ENCODE measurements at regions of chr7 and their contacts with region 1.

Region 1: DNA sequence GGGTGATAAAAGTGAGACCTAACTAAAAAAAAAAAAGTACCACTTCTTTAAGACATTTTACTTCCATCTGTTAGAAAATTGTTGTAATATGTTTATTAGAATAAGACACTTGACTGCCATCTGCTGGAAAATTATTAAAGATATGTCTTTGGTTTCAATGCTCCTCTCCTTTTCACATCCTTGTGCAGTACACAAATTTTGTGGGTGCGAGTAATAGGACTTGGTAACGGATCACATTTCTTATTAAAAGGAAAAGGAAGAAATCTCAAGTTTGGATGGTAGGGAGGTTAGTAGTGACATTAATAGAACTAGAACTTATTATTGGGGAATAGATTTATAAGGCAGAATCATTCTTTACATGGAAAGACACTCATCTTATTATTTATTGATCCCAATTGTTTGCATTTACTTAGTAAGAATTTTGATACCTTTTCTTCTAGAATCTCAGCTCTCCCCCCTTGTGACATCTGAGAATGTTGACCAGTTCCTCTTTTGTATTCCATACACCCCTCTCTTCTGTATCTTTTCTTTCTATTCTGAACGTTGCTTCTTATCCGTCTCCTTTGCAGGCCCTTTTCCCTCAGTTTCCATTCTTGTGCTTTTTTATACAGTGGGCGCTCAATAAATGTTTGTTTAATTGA is 43.1 kb upstream of the RPA3 start:
- DNase-seq: peak; percentile 58
- H3K4me3 ChIP-seq: peak overlapping the region; percentile 5 to 58 (median 40)
- H3K27ac ChIP-seq: no peak overlapping the region
- H3K4me1 ChIP-seq: peaks cover 11% of the 10 kb centered on the region
- H3K27me3 ChIP-seq: no peaks in the 10 kb centered on the region
- CTCF ChIP-seq: peak in 1 of 2 donors; percentile 19
- POLR2A ChIP-seq: no peak

Region 2: GRCh38 chr7:7424151-7424873 is 337.1 kb before region 1 on chr7:
- CTCF ChIA-PET with region 1: interaction called, 4 read pairs
- POLR2A ChIA-PET with region 1: no interaction called
- dilution Hi-C with region 1: no loop called
- intact Hi-C with region 1: loop called (anchors 1 kb)
- DNase-seq: peak; percentile 67
- H3K4me3 ChIP-seq: peak overlapping the region; percentile 37 to 93 (median 81)
- H3K27ac ChIP-seq: peak overlapping the region; percentile 3
- H3K4me1 ChIP-seq: peaks cover 2% of the 10 kb centered on the region
- H3K27me3 ChIP-seq: peaks cover 0 to 2% of the 10 kb centered on the region in 2 experiments
- CTCF ChIP-seq: peak; percentile 73 to 82
- POLR2A ChIP-seq: no peak

Region 3: GRCh38 chr7:7779878-7780277 is 18.4 kb after region 1 on chr7:
- CTCF ChIA-PET with region 1: interaction called, 12 read pairs
- POLR2A ChIA-PET with region 1: no interaction called
- dilution Hi-C with region 1: no loop called
- intact Hi-C with region 1: no loop called
- DNase-seq: peak; percentile 47
- H3K4me3 ChIP-seq: no peak overlapping the region
- H3K27ac ChIP-seq: no peak overlapping the region
- H3K4me1 ChIP-seq: peaks cover 7% of the 10 kb centered on the region
- H3K27me3 ChIP-seq: no peaks in the 10 kb centered on the region
- CTCF ChIP-seq: no peak
- POLR2A ChIP-seq: no peak

Region 4: GRCh38 chr7:7897949-7898515 is 136.6 kb after region 1 on chr7:
- CTCF ChIA-PET with region 1: no interaction called
- POLR2A ChIA-PET with region 1: no interaction called
- dilution Hi-C with region 1: no loop called
- intact Hi-C with region 1: no loop called
- DNase-seq: no peak
- H3K4me3 ChIP-seq: no peak overlapping the region
- H3K27ac ChIP-seq: no peak overlapping the region
- H3K4me1 ChIP-seq: no peaks in the 10 kb centered on the region
- H3K27me3 ChIP-seq: no peaks in the 10 kb centered on the region
- CTCF ChIP-seq: no peak
- POLR2A ChIP-seq: no peak

Region 5: DNA sequence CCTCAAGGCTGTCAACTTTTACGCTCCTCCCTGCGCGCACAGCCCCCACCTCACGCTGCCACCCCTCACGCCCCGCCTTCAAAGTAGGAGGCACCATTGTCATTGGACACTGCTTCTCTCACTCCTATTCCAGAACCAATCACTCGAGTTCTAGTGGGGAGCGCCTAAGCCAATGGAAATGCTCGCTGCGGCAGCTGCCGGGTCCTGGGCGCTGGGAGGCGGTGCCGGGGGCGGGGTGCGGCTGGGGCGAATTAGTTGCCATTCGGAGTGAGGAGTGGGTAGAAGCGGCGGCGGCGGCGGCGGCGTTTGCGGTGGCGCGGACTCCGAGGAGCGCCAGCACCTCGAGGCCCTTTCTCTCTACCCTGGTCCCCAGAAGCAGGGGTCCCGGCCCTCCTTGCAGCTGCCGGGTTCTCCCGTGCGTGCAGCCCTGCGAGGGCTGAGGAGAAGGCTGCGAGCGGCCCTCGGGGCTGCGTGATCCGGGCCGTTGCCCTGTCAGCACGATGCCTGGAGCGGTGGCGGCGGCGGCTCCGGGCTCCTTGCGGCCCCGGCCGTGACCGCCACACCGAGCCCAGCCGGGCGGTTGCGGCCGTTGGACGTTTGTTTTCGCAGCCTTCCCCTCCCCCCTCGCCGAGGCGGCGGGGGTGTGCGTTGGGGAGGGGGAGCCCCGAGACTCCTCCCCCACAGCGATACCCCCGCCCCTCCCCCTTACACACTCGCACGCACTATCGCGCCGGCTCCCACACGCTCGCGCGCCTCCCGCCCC is 207.3 kb after region 1 on chr7 and contains the start of gene GLCCI1:
- CTCF ChIA-PET with region 1: interaction called, 5 read pairs
- POLR2A ChIA-PET with region 1: no interaction called
- dilution Hi-C with region 1: no loop called
- intact Hi-C with region 1: loop called (anchors 2 kb)
- DNase-seq: peak; percentile 98
- H3K4me3 ChIP-seq: peak within 1 kb of the TSS; percentile 61 to 80 (median 70)
- H3K27ac ChIP-seq: no peak within 1 kb of the TSS
- H3K4me1 ChIP-seq: peaks cover 10% of the 10 kb centered on the region
- H3K27me3 ChIP-seq: no peaks in the 10 kb centered on the region
- CTCF ChIP-seq: no peak
- POLR2A ChIP-seq: peak; percentile 60
- total RNA-seq, gene GLCCI1: 5.1 and 5.6 TPM in 2 replicates

Region 6: DNA sequence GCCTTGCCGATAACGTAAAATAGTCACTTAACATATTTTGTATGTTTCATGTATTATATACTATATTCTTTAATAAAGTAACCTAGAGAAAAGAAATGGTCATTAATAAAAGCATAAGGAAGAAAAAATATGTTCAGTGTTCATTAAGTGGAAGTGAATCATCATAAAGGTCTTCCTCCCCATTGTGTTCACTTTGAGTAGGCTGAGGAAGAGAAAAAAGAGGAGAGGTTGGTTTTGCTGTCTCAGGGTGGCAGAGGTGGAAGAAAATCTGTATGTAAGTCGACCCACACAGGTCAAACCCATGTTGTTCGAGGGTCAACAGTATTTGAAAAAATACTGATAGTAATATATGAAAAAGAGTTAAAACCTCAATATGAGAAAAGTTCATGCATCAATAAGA is 297.4 kb after region 1 on chr7:
- CTCF ChIA-PET with region 1: no interaction called
- POLR2A ChIA-PET with region 1: no interaction called
- dilution Hi-C with region 1: no loop called
- intact Hi-C with region 1: loop called (anchors 2 kb)
- DNase-seq: peak; percentile 79
- H3K4me3 ChIP-seq: no peak overlapping the region
- H3K27ac ChIP-seq: peak overlapping the region; percentile 27
- H3K4me1 ChIP-seq: peaks cover 12% of the 10 kb centered on the region
- H3K27me3 ChIP-seq: no peaks in the 10 kb centered on the region
- CTCF ChIP-seq: no peak
- POLR2A ChIP-seq: no peak

Region 7: GRCh38 chr7:8217200-8218068 is 456.0 kb after region 1 on chr7:
- CTCF ChIA-PET with region 1: no interaction called
- POLR2A ChIA-PET with region 1: no interaction called
- dilution Hi-C with region 1: no loop called
- intact Hi-C with region 1: loop called (anchors 2 kb)
- DNase-seq: peak; percentile 67
- H3K4me3 ChIP-seq: no peak overlapping the region
- H3K27ac ChIP-seq: no peak overlapping the region
- H3K4me1 ChIP-seq: no peaks in the 10 kb centered on the region
- H3K27me3 ChIP-seq: no peaks in the 10 kb centered on the region
- CTCF ChIP-seq: peak; percentile 32 to 40
- POLR2A ChIP-seq: no peak

Measured in endothelial cell of umbilical vein (primary cell).